Panc1 (cell line): ENCODE measurements at regions of chr1 and their contacts with region 1.

Region 1: DNA sequence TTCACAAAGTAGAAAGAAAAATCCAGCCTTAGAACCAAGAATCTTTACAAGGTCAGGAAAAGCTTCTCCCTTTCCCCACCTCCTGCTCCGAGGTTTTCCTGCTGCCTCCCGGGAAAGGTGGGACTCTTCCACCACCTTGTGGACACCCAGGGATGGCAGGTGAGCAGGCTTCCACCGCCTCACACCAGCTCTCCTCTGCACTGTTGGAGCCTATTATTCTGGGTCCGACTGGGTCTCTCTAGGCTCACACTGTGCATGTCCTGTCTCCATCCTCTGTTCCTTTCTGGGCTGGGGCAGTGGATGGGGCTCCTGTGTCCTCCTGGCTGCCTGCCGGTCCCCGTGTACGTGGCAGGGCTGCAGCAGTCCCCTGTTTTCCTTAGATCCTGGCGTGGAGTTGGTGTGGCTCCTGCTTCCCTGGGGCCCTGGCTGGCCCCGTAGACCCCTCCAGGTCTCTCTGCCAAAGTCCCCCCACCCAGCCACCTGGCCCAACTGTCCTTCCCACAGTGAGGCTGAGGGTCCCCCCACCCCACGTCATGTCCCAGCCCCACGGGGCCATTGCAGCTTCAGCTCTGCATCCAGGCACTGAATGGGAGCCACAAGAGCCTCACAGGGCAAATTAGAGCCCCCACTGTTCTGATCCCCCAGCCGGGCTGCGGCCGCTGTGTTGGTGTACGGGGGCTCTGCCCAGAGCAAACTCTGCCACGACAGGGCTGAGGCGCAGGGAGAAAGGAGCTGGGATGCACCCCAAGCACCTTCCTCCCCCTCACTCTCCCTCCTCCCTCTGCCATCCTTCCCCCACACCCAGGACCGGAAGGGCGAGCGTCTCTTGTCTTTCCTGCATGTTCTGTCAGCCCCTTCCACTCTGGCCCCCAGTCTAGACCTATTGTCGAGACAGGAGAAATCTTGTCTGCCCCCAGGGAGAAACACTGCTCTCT is 3.3 kb upstream of the SLC45A1 start:
- DNase-seq: peak; percentile 79
- ATAC-seq: peak; percentile 85
- H3K4me3 ChIP-seq: no peak overlapping the region
- H3K27ac ChIP-seq: peak overlapping the region; percentile 98
- H3K4me1 ChIP-seq: peaks cover 60% of the 10 kb centered on the region
- H3K27me3 ChIP-seq: no peaks in the 10 kb centered on the region
- CTCF ChIP-seq: peak; percentile 91

Region 2: GRCh38 chr1:7795406-7795805 is 519.2 kb before region 1 on chr1:
- CTCF ChIA-PET with region 1: no interaction called
- POLR2A ChIA-PET with region 1: no interaction called
- in situ Hi-C with region 1: no loop called
- intact Hi-C with region 1: no loop called
- DNase-seq: no peak
- ATAC-seq: no peak
- H3K4me3 ChIP-seq: no peak overlapping the region
- H3K27ac ChIP-seq: no peak overlapping the region
- H3K4me1 ChIP-seq: no peaks in the 10 kb centered on the region
- H3K27me3 ChIP-seq: no peaks in the 10 kb centered on the region
- CTCF ChIP-seq: no peak

Region 3: GRCh38 chr1:7983086-7983778 is 331.4 kb before region 1 on chr1:
- CTCF ChIA-PET with region 1: interaction called, 4 read pairs
- POLR2A ChIA-PET with region 1: no interaction called
- in situ Hi-C with region 1: no loop called
- intact Hi-C with region 1: loop called (anchors 2 kb)
- DNase-seq: no peak
- ATAC-seq: no peak
- H3K4me3 ChIP-seq: no peak overlapping the region
- H3K27ac ChIP-seq: peak overlapping the region; percentile 93
- H3K4me1 ChIP-seq: peaks cover 26% of the 10 kb centered on the region
- H3K27me3 ChIP-seq: no peaks in the 10 kb centered on the region
- CTCF ChIP-seq: no peak

Region 4: DNA sequence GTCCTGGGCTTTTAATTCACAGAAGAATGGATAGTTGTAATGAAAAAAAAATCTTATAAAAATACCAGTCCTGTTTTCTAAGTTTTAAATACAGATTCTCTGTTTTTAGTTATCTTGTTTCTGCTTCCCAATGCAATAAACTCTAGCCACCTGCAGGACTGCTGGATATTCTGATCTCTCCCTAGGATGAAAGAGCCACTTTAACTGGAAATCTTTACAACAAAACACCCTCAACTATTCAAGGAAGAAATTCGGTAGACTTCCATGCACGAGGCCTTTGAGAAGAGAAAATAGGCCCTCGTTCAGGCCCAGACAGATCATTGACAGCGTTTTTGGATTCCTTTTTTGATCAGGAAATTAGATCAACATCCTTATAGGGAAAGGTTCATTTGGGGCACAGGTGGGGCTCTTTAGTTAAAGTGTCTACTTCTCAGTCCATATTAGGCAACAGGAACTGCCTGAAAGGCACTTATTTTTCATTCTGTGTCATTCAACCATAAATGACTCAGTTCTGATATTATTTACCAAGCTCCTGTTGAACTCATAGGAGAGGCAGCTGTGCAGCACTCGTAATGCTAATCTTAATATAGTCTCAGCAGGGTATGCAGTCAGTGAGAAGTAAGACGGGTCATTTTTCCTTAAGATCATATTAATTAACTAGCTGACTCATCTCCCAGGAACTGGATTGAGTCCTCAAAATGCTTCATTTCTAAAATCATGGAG is 217.4 kb before region 1 on chr1:
- CTCF ChIA-PET with region 1: interaction called, 3 read pairs
- POLR2A ChIA-PET with region 1: no interaction called
- in situ Hi-C with region 1: loop called (anchors 25 kb)
- intact Hi-C with region 1: loop called (anchors 10 kb)
- DNase-seq: peak; percentile 97
- ATAC-seq: peak; percentile 96
- H3K4me3 ChIP-seq: no peak overlapping the region
- H3K27ac ChIP-seq: peak overlapping the region; percentile 100
- H3K4me1 ChIP-seq: peaks cover 56% of the 10 kb centered on the region
- H3K27me3 ChIP-seq: no peaks in the 10 kb centered on the region
- CTCF ChIP-seq: no peak

Region 5: GRCh38 chr1:8197493-8198282 is 116.9 kb before region 1 on chr1:
- CTCF ChIA-PET with region 1: interaction called, 4 read pairs
- POLR2A ChIA-PET with region 1: interaction called, 3 read pairs
- in situ Hi-C with region 1: no loop called
- intact Hi-C with region 1: loop called (anchors 5 kb)
- DNase-seq: peak; percentile 64
- ATAC-seq: peak; percentile 55
- H3K4me3 ChIP-seq: no peak overlapping the region
- H3K27ac ChIP-seq: peak overlapping the region; percentile 99
- H3K4me1 ChIP-seq: peaks cover 76% of the 10 kb centered on the region
- H3K27me3 ChIP-seq: no peaks in the 10 kb centered on the region
- CTCF ChIP-seq: no peak

Region 6: GRCh38 chr1:8396786-8397406 is 82.3 kb after region 1 on chr1:
- CTCF ChIA-PET with region 1: no interaction called
- POLR2A ChIA-PET with region 1: no interaction called
- in situ Hi-C with region 1: no loop called
- intact Hi-C with region 1: no loop called
- DNase-seq: peak; percentile 96
- ATAC-seq: peak; percentile 92
- H3K4me3 ChIP-seq: no peak overlapping the region
- H3K27ac ChIP-seq: peak overlapping the region; percentile 82
- H3K4me1 ChIP-seq: peaks cover 67% of the 10 kb centered on the region
- H3K27me3 ChIP-seq: no peaks in the 10 kb centered on the region
- CTCF ChIP-seq: no peak